Sciatic nerve (tissue), 2 donors: ENCODE measurements at regions of chr22 and their contacts with region 1.

Region 1: DNA sequence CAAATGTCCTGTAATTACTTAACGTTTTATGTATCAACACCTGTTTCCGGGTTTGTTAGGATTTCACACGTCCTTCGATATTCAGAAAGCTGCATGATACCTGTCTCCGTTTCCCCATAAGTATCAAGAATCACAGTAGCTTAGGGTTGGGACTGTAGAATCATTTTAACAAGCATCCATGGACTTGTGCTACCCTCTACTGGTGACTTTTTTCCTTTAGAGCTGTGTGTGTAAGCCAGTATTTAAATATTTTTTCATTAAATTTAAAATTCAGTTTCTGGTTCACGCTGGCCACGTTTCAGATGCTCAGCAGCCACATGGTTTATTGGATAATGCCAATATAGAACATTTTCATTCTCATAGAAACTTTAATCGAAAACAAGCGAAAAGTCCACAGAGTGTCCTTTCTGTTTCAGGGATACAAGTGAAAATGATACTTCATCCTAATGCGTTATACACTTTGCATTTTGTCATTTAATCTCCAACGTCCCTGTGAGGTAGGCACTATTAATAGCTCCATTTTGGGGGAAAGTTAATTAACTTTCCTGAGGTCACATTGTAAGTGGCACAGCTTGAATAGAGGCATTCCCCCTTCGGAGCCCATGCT is 61.5 kb upstream of the SLC25A18 start:
- DNase-seq: no peak
- ATAC-seq: peak; percentile 83

Region 2: GRCh38 chr22:17171313-17172171 is 330.2 kb before region 1 on chr22:
- intact Hi-C with region 1: loop called (anchors 10 kb)
- DNase-seq: peak; percentile 90
- ATAC-seq: peak; percentile 96

Region 3: DNA sequence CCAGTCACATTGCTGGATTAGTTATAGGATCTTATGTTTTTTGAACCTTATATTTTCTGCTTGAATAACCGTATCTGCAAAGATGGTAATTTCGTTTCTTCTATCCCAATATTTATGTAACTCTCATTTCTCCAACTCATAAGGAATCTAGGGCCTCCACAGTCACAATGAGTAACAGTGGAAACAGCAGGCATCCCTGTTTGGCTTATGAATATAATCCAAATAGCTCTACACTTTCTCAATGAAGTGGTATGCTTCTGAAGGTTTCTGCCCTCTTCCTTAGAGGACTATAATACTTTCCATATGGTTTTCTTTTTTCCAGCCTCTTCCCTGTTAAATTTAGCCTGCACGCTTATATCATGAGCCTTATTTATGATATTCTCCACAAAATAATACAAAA is 110.3 kb after region 1 on chr22:
- intact Hi-C with region 1: no loop called
- DNase-seq: no peak
- ATAC-seq: no peak